ENCODE measurements at regions of chr7 and their contacts with region 1.

Region 1: DNA sequence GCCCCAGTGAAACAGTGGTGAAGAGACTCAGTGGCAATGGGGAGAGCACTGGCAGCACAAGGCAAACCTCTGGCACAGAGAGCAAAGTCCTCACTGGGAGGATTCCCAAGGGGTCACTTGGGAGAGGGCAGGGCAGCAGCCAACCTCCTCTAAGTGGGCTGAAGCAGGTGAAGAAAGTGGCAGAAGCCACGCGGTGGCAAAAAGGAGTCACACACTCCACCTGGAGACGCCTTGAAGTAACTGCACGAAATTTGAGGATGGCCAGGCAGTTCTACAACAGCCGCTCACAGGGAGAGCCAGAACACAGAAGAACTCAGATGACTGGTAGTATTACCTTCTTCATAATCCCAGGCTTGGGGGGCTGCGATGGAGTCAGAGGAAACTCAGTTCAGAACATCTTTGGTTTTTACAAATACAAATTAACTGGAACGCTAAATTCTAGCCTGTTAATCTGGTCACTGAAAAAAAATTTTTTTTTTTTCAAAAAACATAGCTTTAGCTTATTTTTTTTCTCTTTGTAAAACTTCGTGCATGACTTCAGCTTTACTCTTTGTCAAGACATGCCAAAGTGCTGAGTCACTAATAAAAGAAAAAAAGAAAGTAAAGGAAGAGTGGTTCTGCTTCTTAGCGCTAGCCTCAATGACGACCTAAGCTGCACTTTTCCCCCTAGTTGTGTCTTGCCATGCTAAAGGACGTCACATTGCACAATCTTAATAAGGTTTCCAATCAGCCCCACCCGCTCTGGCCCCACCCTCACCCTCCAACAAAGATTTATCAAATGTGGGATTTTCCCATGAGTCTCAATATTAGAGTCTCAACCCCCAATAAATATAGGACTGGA is 435 bp upstream of the IL6 start:
- DNase-seq: peak; percentile 76
- H3K4me3 Mint-ChIP-seq: peak overlapping the region; percentile 70
- H3K27ac Mint-ChIP-seq: peak overlapping the region; percentile 89
- H3K4me1 Mint-ChIP-seq: peaks cover 30% of the 10 kb centered on the region
- H3K27me3 Mint-ChIP-seq: peaks cover 24% of the 10 kb centered on the region

Region 2: DNA sequence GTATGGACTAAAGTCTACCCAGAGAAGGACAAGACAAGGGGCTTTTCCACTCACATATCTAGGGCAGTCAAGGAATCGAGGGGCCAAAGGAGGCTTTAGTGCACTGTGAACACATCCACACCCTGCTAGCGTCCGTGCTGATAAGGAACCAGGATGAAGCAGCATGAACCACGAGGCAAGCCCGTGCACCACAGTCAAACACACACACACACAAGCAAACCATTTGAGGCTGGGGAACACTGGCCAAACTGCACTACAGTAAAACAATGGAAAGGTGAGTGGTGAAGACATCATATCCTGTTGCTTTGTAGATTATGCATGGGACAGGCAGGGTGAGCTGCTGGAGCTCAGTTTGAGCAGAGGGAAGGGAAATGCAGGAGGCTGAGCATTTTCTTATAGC is 603.4 kb before region 1 on chr7:
- CTCF ChIA-PET with region 1: no interaction called
- intact Hi-C with region 1: no loop called
- DNase-seq: no peak
- H3K4me3 Mint-ChIP-seq: no peak overlapping the region
- H3K27ac Mint-ChIP-seq: no peak overlapping the region
- H3K4me1 Mint-ChIP-seq: peaks cover 9% of the 10 kb centered on the region
- H3K27me3 Mint-ChIP-seq: peaks cover 5% of the 10 kb centered on the region

Region 3: GRCh38 chr7:22559829-22560489 is 166.6 kb before region 1 on chr7:
- CTCF ChIA-PET with region 1: interaction called, 331 read pairs
- intact Hi-C with region 1: loop called (anchors 1 kb)
- DNase-seq: peak; percentile 81
- H3K4me3 Mint-ChIP-seq: no peak overlapping the region
- H3K27ac Mint-ChIP-seq: no peak overlapping the region
- H3K4me1 Mint-ChIP-seq: peaks cover 28% of the 10 kb centered on the region
- H3K27me3 Mint-ChIP-seq: peaks cover 7% of the 10 kb centered on the region

Region 4: GRCh38 chr7:22640269-22640668 is 86.3 kb before region 1 on chr7:
- CTCF ChIA-PET with region 1: interaction called, 4 read pairs
- intact Hi-C with region 1: loop called (anchors 1 kb)
- DNase-seq: peak; percentile 75
- H3K4me3 Mint-ChIP-seq: no peak overlapping the region
- H3K27ac Mint-ChIP-seq: peak overlapping the region; percentile 41
- H3K4me1 Mint-ChIP-seq: peaks cover 23% of the 10 kb centered on the region
- H3K27me3 Mint-ChIP-seq: peaks cover 8% of the 10 kb centered on the region

Region 5: DNA sequence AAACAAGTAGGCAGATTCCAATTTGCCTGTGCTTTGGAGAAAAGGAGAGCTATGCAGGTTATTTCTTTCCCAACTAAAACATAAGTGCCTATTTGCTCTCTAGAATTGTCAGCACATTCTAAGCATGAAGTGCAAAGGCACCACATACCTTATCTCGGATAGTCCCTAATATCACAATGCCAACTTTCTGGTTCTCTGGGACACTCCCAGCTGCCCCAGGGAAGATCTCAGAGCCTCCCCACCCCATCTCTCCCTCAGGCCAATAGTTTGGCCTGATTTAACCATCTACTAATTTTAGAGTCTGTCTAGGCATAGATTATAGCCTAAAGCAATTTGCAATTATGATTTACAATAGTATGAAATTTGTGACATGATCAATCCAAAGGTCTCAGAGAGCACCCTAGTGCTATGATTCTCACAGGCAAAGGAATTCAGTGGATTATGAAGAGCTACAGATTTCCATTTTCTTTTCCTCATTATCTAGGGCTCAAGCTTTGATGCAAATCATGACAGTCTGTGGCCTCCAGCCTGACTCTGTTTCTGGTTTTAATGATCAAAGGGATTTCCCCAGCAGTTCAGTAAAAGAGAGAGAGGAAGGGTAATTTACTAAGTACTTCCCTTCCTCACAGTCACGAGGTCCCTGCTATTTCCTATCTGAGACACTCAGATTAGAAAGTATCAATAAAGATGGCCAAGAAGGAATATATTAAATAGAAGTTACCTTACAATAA is 28.5 kb before region 1 on chr7:
- CTCF ChIA-PET with region 1: interaction called, 56 read pairs
- intact Hi-C with region 1: loop called (anchors 1 kb)
- DNase-seq: peak; percentile 59
- H3K4me3 Mint-ChIP-seq: no peak overlapping the region
- H3K27ac Mint-ChIP-seq: peak overlapping the region; percentile 84
- H3K4me1 Mint-ChIP-seq: peaks cover 67% of the 10 kb centered on the region
- H3K27me3 Mint-ChIP-seq: no peaks in the 10 kb centered on the region

Region 6: DNA sequence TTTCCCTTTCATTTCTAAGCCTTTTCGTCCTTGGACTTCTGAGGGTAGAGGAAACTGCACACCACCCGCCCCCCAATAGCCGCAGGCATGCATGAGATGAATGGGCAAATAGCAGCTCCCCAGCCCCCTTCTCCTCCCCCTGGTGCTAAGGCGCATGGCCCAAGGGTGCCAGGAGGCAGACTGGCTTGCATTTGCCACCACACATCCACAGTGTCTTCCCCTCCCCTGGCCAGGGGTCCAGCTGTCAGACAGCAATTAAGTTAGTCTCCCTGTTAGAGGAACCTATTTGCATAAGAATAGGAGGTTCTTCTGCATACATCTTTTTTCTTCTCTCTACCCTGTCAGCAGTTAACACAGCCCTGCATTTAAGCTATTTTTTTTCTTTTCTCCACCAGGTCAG is 75.9 kb after region 1 on chr7:
- CTCF ChIA-PET with region 1: no interaction called
- intact Hi-C with region 1: no loop called
- DNase-seq: no peak
- H3K4me3 Mint-ChIP-seq: no peak overlapping the region
- H3K27ac Mint-ChIP-seq: no peak overlapping the region
- H3K4me1 Mint-ChIP-seq: no peaks in the 10 kb centered on the region
- H3K27me3 Mint-ChIP-seq: peaks cover 4% of the 10 kb centered on the region

Region 7: GRCh38 chr7:22822486-22823141 is 96.0 kb after region 1 on chr7 and contains the start of gene TOMM7:
- CTCF ChIA-PET with region 1: interaction called, 3 read pairs
- intact Hi-C with region 1: loop called (anchors 2 kb)
- DNase-seq: peak; percentile 92
- H3K4me3 Mint-ChIP-seq: peak within 1 kb of the TSS; percentile 99
- H3K27ac Mint-ChIP-seq: peak within 1 kb of the TSS; percentile 96
- H3K4me1 Mint-ChIP-seq: peaks cover 36% of the 10 kb centered on the region
- H3K27me3 Mint-ChIP-seq: peaks cover 10% of the 10 kb centered on the region
- total RNA-seq, gene TOMM7: 269 to 297 TPM

Region 8: DNA sequence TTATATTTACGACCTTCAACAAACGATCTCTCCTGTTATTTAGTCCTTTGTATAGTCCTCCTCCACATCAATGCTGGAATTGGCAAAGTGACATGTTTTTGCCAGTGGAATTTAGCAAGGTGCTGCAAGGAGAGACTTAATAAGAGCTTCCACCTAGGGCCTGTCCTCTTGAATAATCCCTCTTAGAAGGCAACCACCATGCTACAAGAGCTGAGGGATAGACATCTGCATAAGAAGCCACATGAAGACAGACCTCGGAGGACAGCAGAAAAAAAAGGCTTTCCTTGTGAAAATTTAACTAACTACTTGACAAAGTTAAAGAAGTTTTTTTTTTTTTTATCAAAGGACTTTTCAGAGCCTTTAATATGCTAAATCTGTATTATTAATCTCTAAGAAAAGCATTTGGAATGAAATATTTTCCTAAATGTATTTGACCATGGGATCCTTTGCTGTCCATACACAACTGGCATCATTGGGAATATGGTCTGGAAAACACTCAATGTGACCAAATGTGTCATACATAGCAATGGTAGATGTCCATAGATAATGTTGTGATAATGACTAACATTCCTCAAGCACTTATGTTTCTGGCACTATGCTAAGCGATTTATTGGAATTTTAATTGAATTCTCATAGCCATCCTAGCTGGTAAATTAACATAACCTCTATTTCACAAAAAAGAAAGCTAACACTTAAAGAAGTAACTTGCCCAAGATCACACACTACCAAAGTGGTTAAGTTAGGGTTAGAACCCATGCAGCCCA is 274.2 kb after region 1 on chr7:
- CTCF ChIA-PET with region 1: no interaction called
- intact Hi-C with region 1: no loop called
- DNase-seq: no peak
- H3K4me3 Mint-ChIP-seq: no peak overlapping the region
- H3K27ac Mint-ChIP-seq: no peak overlapping the region
- H3K4me1 Mint-ChIP-seq: peaks cover 27% of the 10 kb centered on the region
- H3K27me3 Mint-ChIP-seq: no peaks in the 10 kb centered on the region

Measured in activated naive CD4-positive, alpha-beta T cell treated with anti-CD3 and anti-CD28 coated beads for 36 hours (primary cell).